ENCODE measurements at regions of chr3 and their contacts with region 1.

Region 1: DNA sequence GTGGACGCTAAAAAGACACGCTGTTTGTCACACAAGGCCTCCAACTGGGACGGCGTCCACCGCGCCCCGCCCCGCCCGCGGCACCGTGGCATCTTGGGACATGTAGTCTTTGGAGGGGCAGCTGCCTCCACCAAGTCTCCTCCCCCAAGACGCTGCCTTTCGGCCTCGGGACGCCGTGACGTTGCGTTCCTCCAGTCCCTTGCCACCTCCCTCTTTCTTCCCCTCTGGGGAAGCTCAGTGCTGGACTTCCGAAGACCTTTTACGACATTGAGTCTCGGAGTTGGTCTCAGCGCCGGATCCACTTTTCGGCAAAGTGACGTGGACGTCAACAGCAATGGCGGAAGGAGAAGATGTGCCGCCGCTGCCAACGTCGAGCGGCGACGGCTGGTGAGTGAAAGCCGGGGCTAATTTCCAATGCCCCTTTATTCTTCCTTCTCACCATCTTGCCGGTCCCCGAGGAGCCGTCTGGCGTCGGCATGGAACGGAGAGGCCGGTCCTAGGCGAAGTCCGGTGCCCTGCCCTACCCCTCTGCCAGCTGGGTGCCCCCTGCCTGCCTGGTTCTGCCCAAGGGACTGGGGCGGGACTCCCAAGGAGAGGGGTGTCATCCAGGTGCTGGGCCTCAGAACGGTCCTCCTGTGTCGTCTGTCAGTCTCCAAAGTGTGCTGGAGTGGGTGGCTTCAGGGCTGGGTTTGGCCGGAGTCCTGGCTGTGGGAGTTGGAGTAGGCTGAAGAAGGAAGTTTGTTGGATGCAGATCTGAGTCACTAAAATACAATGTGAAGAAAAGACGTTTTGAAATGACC is at the start of gene TBC1D23:
- DNase-seq: peak; percentile 93
- ATAC-seq: peak; percentile 100
- H3K4me3 Mint-ChIP-seq: peak within 1 kb of the TSS; percentile 93
- H3K27ac Mint-ChIP-seq: peak within 1 kb of the TSS; percentile 96
- H3K4me1 Mint-ChIP-seq: peaks cover 43% of the 10 kb centered on the region
- H3K27me3 Mint-ChIP-seq: no peaks in the 10 kb centered on the region
- CTCF ChIP-seq: no peak
- total RNA-seq, gene TBC1D23: 27.2 and 27.7 TPM in 2 replicates

Region 2: GRCh38 chr3:99817437-99818240 is 443.2 kb before region 1 on chr3 and contains the start of gene CMSS1:
- CTCF ChIA-PET with region 1: interaction called, 4 read pairs
- POLR2A ChIA-PET with region 1: interaction called, 11 read pairs
- intact Hi-C with region 1: loop called (anchors 1 kb)
- DNase-seq: peak; percentile 96
- ATAC-seq: peak; percentile 94
- H3K4me3 Mint-ChIP-seq: peak within 1 kb of the TSS; percentile 97
- H3K27ac Mint-ChIP-seq: peak within 1 kb of the TSS; percentile 99
- H3K4me1 Mint-ChIP-seq: peaks cover 37% of the 10 kb centered on the region
- H3K27me3 Mint-ChIP-seq: no peaks in the 10 kb centered on the region
- CTCF ChIP-seq: no peak
- total RNA-seq, gene CMSS1: 37.4 and 41.1 TPM in 2 replicates

Region 3: GRCh38 chr3:100226712-100227429 is 34.0 kb before region 1 on chr3:
- CTCF ChIA-PET with region 1: no interaction called
- POLR2A ChIA-PET with region 1: no interaction called
- intact Hi-C with region 1: no loop called
- DNase-seq: no peak
- ATAC-seq: no peak
- H3K4me3 Mint-ChIP-seq: no peak overlapping the region
- H3K27ac Mint-ChIP-seq: no peak overlapping the region
- H3K4me1 Mint-ChIP-seq: no peaks in the 10 kb centered on the region
- H3K27me3 Mint-ChIP-seq: peaks cover 2% of the 10 kb centered on the region
- CTCF ChIP-seq: no peak

Region 4: DNA sequence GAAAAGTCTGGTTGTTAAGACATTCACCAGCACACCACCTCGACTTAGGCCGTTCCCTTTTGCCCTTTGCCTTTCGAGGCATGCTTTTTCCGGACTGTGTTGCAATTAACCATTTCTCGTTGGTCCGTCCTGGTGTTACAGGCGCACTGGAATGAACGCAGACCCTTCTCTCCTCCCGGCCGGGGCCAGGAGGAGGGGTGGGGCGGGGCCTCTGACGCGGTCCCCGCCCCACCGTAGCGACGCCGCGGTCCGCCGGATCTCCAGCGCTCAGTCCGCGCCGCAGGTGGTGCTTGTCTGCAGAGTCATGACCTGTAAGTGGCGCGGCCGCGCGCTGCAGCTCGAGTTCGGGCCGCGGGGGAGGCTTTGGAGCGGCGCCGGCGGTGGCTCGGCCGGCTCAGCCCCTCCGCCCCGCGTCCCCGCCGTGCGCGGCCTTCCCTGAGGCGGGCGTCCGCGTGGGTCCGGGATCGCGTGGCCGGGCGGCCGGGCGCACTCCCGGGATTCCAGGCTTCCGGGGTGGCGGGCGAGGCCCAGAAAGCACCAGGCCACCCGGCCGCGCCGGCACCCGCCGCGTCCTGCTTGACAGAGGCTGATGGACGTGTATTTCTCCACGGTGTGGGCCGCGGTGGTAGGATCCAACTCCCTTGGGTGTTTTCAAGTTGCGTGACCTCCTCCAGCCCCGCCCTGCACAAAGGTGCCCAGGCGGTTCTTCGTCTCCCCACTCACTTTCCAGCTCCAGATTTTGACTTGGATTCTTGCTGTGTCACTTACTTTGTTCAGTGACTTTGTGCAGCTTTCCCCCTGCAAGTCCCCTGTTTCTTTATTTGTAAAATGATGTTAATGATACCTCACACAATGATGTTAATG is 73.8 kb after region 1 on chr3 and contains the start of gene NIT2:
- CTCF ChIA-PET with region 1: no interaction called
- POLR2A ChIA-PET with region 1: interaction called, 12 read pairs
- intact Hi-C with region 1: loop called (anchors 1 kb)
- DNase-seq: peak; percentile 72
- ATAC-seq: peak; percentile 96
- H3K4me3 Mint-ChIP-seq: peak within 1 kb of the TSS; percentile 91
- H3K27ac Mint-ChIP-seq: peak within 1 kb of the TSS; percentile 92
- H3K4me1 Mint-ChIP-seq: peaks cover 19% of the 10 kb centered on the region
- H3K27me3 Mint-ChIP-seq: no peaks in the 10 kb centered on the region
- CTCF ChIP-seq: no peak
- total RNA-seq, gene NIT2: 52.0 and 55.6 TPM in 2 replicates

Region 5: GRCh38 chr3:101676765-101677435 is 1416.0 kb after region 1 on chr3 and contains the start of gene ZBTB11:
- CTCF ChIA-PET with region 1: no interaction called
- POLR2A ChIA-PET with region 1: no interaction called
- intact Hi-C with region 1: loop called (anchors 2 kb)
- DNase-seq: peak; percentile 99
- ATAC-seq: peak; percentile 68
- H3K4me3 Mint-ChIP-seq: peak within 1 kb of the TSS; percentile 93
- H3K27ac Mint-ChIP-seq: peak within 1 kb of the TSS; percentile 96
- H3K4me1 Mint-ChIP-seq: peaks cover 56% of the 10 kb centered on the region
- H3K27me3 Mint-ChIP-seq: no peaks in the 10 kb centered on the region
- CTCF ChIP-seq: no peak
- total RNA-seq, gene ZBTB11: 26.2 and 28.7 TPM in 2 replicates